Left cardiac atrium (tissue), 4 donors: ENCODE measurements at regions of chr19 and their contacts with region 1.

Region 1: DNA sequence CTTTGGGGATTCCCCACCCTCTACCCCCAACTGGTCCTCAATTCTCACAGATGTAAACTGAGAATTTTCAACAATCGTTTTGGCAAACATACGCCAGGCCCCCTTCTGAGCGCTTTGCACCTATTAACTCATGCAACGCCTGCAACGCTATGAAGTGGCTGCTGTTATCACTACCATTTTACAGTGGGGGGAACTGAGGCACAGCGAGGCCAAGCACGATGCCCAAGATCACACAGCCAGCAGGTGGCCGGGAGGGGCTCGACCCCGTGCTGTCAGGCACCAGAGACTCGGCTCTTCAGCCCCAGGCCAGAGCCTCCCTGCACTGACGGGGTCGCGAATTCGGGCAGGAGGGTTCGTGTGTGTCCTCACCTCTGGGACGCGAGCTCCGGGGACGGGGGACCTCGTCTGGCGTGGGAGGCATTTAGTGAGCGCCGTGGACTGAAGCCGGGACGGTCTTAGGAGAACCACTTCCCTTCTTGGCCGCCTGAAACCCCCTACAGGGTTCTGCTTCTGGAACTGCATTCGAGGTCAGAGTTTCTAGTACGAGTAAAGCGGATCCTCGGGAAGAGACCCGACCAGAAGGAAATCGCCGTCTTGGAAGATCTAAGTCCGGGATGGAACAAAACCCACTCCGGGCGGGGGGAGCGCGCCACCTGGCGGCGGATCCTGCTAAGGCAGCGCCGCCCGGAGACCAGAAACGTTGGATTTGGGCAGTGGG is 21.0 kb downstream of the ZNF114 start:
- DNase-seq: peak; percentile 88
- ATAC-seq: peak; percentile 90 to 91

Region 2: GRCh38 chr19:47839913-47840312 is 451.0 kb before region 1 on chr19:
- intact Hi-C with region 1: no loop called
- DNase-seq: no peak
- ATAC-seq: no peak

Region 3: GRCh38 chr19:48271531-48272151 is 19.3 kb before region 1 on chr19:
- intact Hi-C with region 1: loop called (anchors 1 to 2 kb)
- DNase-seq: peak; percentile 52
- ATAC-seq: peak; percentile 64 to 79

Region 4: DNA sequence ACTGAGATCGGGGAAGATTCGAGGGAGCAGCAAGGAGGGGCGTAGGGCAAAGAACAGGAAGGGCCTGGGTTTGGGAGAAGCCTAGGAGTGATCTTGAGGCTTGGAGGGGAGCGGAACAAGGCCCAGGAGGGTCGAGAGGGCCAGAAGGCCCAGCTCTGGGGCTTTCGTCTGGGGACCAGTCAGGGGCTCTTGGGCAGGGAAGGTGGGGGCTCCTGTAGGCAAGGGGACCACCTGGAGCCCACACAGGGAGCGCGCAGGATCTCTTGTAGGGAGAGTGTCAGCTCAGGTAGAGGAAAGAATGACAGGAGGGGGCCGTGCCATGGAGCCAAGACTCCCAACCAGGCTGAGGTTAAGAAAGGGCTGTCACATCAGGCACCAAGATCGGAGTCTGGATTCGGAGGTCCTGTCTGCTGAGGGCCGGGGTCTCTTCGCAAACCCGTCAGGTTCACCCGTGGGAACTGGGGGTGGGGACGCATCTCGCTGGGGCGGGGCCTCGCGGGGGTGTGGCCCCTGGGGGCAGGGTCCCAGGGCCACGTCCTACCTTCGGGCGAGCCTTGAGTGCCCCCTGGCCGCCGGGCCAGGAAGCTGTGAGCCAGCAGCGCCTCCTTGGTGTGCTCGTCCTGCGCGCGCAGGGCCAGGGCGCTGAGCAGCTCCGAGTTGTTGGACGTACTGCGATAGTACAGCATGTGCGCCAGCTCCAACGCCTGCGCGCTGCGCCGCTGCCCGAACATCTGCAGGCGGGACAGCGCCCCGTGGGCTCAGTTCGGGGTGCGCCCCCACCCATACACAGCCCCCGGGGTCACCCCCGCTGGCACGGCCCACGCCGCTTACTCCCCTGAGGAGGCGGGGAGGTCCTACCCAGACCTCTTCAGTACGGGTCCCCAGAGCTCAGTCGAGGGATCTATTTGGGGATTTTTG is 42.8 kb after region 1 on chr19:
- intact Hi-C with region 1: loop called in 1 of 2 experiments (anchors 2 kb)
- DNase-seq: peak; percentile 94
- ATAC-seq: peak; percentile 85 to 92